Right ventricle myocardium inferior (tissue), 1 donor: ENCODE measurements at regions of chr20 and their contacts with region 1.

Region 1: DNA sequence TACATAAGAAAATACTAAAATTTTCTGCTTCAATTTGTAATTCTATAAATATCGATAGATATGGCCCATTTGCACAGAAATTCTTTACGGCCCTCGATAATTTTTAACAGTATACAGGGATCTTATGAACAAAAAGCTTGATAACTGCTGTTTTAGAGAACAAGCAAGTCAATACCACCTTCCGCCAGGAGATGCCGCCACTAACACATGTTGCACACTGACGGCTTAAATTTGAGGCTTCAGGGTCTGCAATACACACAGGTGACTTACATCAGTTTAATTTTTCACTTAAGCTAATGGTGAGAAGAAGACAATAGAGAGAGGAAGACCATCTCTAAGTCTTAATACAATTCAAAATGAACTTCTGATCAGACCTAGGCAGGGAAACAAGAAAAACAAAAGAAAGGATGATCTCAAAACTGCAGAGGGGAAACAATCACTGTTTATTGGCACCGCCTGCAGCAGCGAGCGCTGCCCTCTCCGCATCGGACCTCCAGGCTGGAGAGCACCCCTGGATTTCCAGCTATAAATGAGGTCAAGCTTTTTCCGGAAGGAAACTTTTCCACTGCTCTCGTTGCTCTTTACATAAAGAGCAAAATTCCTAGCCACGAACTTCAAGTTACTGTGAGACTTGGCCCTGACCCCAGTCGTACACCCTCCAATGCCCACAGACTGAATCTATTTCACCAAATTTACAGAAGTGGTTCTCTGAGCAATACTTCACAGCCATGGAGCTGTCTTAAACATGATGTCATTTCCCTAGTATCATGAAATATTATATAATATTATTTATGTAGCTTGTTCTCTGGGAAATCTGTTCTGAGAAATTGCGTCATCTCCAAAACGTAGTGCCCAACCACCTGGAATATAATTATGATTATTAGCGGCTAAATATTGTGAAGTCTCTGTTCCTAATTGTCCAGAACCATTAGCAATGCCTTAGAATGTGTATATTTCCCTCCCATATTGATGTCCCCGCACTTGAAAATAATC is 54.1 kb downstream of the OTOR start:
- DNase-seq: no peak
- ATAC-seq: no peak

Region 2: GRCh38 chr20:17431621-17432364 is 629.6 kb after region 1 on chr20:
- intact Hi-C with region 1: loop called (anchors 1 kb)
- DNase-seq: peak; percentile 64
- ATAC-seq: no peak